Activated CD4-positive, alpha-beta T cell treated with anti-CD3 and anti-CD28 coated beads for 36 hours (primary cell): ENCODE measurements at regions of chr6 and their contacts with region 1.

Region 1: GRCh38 chr6:90230548-90231215 is 66.0 kb downstream of the BACH2 start:
- DNase-seq: no peak
- ATAC-seq: no peak
- H3K4me3 Mint-ChIP-seq: no peak overlapping the region
- H3K27ac Mint-ChIP-seq: peak overlapping the region; percentile 59
- H3K4me1 Mint-ChIP-seq: peaks cover 94% of the 10 kb centered on the region
- H3K27me3 Mint-ChIP-seq: no peaks in the 10 kb centered on the region

Region 2: DNA sequence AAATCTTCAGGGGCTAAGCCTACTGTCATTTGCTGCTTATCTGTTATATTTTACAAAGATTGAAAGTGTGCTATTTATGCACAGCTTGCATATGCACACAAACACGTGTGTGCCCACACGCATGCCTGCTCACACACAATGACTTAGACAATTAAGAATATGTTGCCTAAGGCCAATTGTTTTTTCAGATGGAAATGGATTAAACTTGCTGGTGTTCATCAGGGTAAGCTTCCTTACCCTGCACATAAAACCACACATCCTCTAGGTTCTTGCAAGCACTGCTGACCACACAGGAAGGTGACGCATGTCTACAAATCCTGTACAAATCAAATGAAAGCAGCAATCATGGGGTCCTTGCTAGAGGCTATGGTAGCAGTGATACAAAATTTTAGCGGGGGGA is 278.0 kb before region 1 on chr6:
- CTCF ChIA-PET with region 1: no interaction called
- POLR2A ChIA-PET with region 1: no interaction called
- intact Hi-C with region 1: loop called in 1 of 2 experiments (anchors 5 kb)
- DNase-seq: peak; percentile 66
- ATAC-seq: peak; percentile 60
- H3K4me3 Mint-ChIP-seq: no peak overlapping the region
- H3K27ac Mint-ChIP-seq: peak overlapping the region; percentile 79
- H3K4me1 Mint-ChIP-seq: peaks cover 75% of the 10 kb centered on the region
- H3K27me3 Mint-ChIP-seq: no peaks in the 10 kb centered on the region

Region 3: DNA sequence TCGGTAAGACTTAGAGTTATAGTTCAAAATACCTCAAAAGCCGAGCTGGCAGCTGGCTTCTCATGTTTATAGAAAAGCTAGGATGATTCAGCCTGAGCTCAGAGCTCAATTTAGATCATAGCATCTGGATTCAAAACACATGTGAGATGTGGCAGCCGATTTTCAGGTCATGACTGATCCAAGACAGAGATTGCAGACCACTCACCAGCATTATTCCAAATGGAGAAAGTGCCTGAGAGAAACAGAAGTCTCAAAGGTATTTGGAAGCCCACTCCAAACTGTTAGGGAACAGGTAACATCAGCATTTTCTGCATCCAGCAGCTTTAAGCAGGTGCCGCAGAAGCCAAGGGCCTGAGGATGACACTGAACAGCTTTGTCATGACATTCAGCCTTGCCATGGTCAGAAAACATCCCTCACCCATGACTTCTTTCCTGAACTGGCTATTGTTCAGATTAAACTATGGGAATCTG is 36.3 kb before region 1 on chr6:
- CTCF ChIA-PET with region 1: no interaction called
- POLR2A ChIA-PET with region 1: no interaction called
- intact Hi-C with region 1: loop called in 1 of 2 experiments (anchors 2 kb)
- DNase-seq: peak; percentile 53
- ATAC-seq: peak; percentile 42
- H3K4me3 Mint-ChIP-seq: peak overlapping the region; percentile 5
- H3K27ac Mint-ChIP-seq: peak overlapping the region; percentile 88
- H3K4me1 Mint-ChIP-seq: peaks cover 93% of the 10 kb centered on the region
- H3K27me3 Mint-ChIP-seq: no peaks in the 10 kb centered on the region

Region 4: GRCh38 chr6:90202156-90202555 is 28.5 kb before region 1 on chr6:
- CTCF ChIA-PET with region 1: no interaction called
- POLR2A ChIA-PET with region 1: no interaction called
- intact Hi-C with region 1: loop called in 1 of 2 experiments (anchors 2 kb)
- DNase-seq: peak; percentile 53
- ATAC-seq: peak; percentile 75
- H3K4me3 Mint-ChIP-seq: peak overlapping the region; percentile 11
- H3K27ac Mint-ChIP-seq: peak overlapping the region; percentile 87
- H3K4me1 Mint-ChIP-seq: peaks cover 86% of the 10 kb centered on the region
- H3K27me3 Mint-ChIP-seq: no peaks in the 10 kb centered on the region

Region 5: DNA sequence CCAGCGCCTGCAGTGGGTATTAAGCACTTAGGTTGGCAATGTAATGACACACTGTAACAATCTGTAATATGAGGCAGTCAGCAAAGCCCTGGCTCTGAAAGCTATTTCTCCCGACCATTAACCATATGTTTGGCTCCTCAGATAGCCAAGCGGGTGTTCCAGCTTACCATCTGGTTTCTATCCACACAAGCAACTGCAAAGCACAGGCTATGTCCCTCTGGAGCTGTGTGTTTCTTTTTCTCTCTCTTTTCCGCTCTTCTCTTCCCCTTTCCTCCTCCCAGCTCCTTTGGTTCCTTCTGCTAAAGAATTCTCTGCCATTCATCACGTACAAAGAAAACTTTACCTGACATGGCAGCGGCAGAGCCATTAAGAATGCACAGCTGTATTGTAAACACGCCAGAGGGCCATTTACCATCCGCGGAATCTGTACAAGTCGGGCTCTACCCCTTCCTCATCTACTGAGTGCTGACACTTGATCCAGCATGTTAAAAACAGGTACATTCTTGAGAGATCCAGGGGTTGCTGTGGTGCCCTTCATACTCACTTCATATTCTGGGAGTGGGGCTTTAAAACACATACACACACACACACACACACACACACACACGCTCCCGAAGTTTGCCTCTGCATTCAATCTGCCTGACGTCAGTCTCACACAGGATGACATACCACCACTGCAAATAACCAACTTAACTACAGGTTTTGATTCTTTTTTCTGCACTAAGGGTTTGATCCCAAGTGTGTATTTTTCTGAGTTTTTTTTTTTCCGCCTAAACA is 11.3 kb before region 1 on chr6:
- CTCF ChIA-PET with region 1: interaction called, 4 read pairs
- POLR2A ChIA-PET with region 1: no interaction called
- intact Hi-C with region 1: loop called (anchors 1 to 2 kb)
- DNase-seq: peak; percentile 50
- ATAC-seq: no peak
- H3K4me3 Mint-ChIP-seq: no peak overlapping the region
- H3K27ac Mint-ChIP-seq: no peak overlapping the region
- H3K4me1 Mint-ChIP-seq: peaks cover 20% of the 10 kb centered on the region
- H3K27me3 Mint-ChIP-seq: no peaks in the 10 kb centered on the region

Region 6: DNA sequence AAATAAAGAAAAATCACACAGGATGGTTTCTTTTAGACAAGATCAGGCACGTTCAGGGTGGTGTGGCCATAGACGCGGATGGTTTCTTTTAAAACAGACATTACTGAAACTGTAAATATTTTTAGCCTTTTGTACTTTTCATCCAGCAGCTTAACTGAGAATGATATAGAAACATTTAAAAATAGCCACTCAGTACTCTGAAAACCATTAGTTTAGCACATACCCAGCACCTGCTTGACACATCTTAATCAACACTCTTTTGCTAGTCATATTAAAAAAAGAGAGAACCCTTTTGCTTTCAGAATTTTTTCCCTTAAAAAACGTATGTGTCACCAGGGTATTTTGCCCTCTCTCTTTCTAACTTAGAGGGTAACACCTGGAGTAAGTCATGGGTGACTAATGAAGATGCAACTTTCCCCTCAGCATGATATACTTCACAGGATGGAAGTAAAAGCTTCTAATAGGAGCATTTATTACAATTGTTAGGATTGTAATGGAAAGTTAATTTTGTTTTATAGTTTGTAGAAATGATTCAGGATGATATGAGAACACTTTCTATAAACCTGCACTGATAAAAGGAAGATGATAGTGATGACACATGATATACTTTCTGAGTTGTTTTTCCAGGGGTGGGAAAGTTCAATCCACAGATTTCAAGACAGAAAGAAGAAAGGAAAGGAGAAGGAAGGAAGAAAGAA is 20.8 kb after region 1 on chr6:
- CTCF ChIA-PET with region 1: interaction called, 4 read pairs
- POLR2A ChIA-PET with region 1: no interaction called
- intact Hi-C with region 1: loop called (anchors 1 kb)
- DNase-seq: no peak
- ATAC-seq: peak; percentile 72
- H3K4me3 Mint-ChIP-seq: peak overlapping the region; percentile 26
- H3K27ac Mint-ChIP-seq: peak overlapping the region; percentile 97
- H3K4me1 Mint-ChIP-seq: peaks cover 89% of the 10 kb centered on the region
- H3K27me3 Mint-ChIP-seq: no peaks in the 10 kb centered on the region

Region 7: GRCh38 chr6:90350689-90351554 is 120.2 kb after region 1 on chr6:
- CTCF ChIA-PET with region 1: no interaction called
- POLR2A ChIA-PET with region 1: no interaction called
- intact Hi-C with region 1: loop called in 1 of 2 experiments (anchors 1 kb)
- DNase-seq: peak; percentile 60
- ATAC-seq: peak; percentile 65
- H3K4me3 Mint-ChIP-seq: peak overlapping the region; percentile 44
- H3K27ac Mint-ChIP-seq: peak overlapping the region; percentile 91
- H3K4me1 Mint-ChIP-seq: peaks cover 54% of the 10 kb centered on the region
- H3K27me3 Mint-ChIP-seq: no peaks in the 10 kb centered on the region